CD8-positive, alpha-beta T cell (primary cell): ENCODE measurements at regions of chr17 and their contacts with region 1.

Region 1: GRCh38 chr17:80544655-80545498 is at the start of gene RPTOR:
- DNase-seq: peak; percentile 77 to 92 (median 87)
- ATAC-seq: peak; percentile 99
- H3K4me3 ChIP-seq: peak within 1 kb of the TSS; percentile 95
- H3K4me3 Mint-ChIP-seq: peak within 1 kb of the TSS; percentile 94
- H3K27ac ChIP-seq: peak within 1 kb of the TSS; percentile 61 to 71
- H3K27ac Mint-ChIP-seq: peak within 1 kb of the TSS; percentile 92
- H3K4me1 ChIP-seq: peaks cover 14% of the 10 kb centered on the region
- H3K4me1 Mint-ChIP-seq: peaks cover 32% of the 10 kb centered on the region
- H3K27me3 ChIP-seq: no peaks in the 10 kb centered on the region
- H3K27me3 Mint-ChIP-seq: peaks cover 12% of the 10 kb centered on the region
- CTCF ChIP-seq: no peak
- total RNA-seq, gene RPTOR: 44.5 to 48.3 TPM

Region 2: GRCh38 chr17:80195731-80196529 is 348.9 kb before region 1 on chr17:
- CTCF ChIA-PET with region 1: no interaction called
- POLR2A ChIA-PET with region 1: no interaction called
- intact Hi-C with region 1: no loop called
- DNase-seq: peak; percentile 31 to 81 (median 63)
- ATAC-seq: peak; percentile 52
- H3K4me3 ChIP-seq: no peak overlapping the region
- H3K4me3 Mint-ChIP-seq: no peak overlapping the region
- H3K27ac ChIP-seq: no peak overlapping the region
- H3K27ac Mint-ChIP-seq: no peak overlapping the region
- H3K4me1 ChIP-seq: no peaks in the 10 kb centered on the region
- H3K4me1 Mint-ChIP-seq: no peaks in the 10 kb centered on the region
- H3K27me3 ChIP-seq: no peaks in the 10 kb centered on the region
- H3K27me3 Mint-ChIP-seq: peaks cover 6% of the 10 kb centered on the region
- CTCF ChIP-seq: peak; percentile 97

Region 3: DNA sequence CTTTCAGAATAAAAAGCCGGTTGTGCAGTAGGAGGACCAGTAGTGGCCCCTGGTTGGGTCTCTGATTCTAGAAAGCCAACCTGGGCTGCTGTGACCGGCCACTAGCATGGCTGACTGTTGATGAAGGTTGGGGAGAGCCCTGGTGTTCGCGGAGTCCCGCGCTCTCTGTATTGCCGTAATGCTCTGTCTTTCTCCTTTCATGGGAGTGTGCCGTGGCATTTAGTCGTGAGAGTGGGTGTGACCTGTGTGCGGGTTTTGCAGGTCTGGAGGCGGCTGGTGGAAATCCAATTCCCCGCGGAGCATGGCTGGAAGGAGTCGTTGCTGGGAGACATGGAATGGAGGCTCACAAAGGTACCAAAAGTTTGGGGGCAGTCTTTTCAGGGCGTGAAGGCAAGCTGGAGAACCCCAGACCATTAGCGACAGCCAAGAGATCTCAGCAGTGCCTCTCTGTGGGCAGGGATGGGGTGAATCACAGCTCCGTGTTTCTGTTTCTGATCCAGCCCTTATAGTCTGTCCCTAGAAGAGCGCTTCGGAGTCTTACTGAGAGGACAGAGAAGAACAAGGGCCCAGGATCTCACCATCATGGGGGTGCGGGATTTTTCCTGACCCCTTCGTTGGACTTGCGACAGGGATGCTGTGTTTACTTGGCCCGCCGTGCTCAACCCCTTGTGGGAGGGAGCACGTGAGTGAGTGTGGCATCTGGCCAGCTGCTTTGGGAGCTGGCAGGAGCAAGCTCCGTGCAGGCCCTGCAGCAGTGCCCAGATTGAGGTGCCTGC is 227.8 kb before region 1 on chr17:
- CTCF ChIA-PET with region 1: no interaction called
- POLR2A ChIA-PET with region 1: no interaction called
- intact Hi-C with region 1: no loop called
- DNase-seq: no peak
- ATAC-seq: no peak
- H3K4me3 ChIP-seq: no peak overlapping the region
- H3K4me3 Mint-ChIP-seq: no peak overlapping the region
- H3K27ac ChIP-seq: no peak overlapping the region
- H3K27ac Mint-ChIP-seq: no peak overlapping the region
- H3K4me1 ChIP-seq: no peaks in the 10 kb centered on the region
- H3K4me1 Mint-ChIP-seq: no peaks in the 10 kb centered on the region
- H3K27me3 ChIP-seq: no peaks in the 10 kb centered on the region
- H3K27me3 Mint-ChIP-seq: no peaks in the 10 kb centered on the region
- CTCF ChIP-seq: no peak

Region 4: GRCh38 chr17:80414803-80415625 is 129.9 kb before region 1 on chr17 and contains the start of gene ENDOV:
- CTCF ChIA-PET with region 1: no interaction called
- POLR2A ChIA-PET with region 1: no interaction called
- intact Hi-C with region 1: loop called in 1 of 2 experiments (anchors 10 kb)
- DNase-seq: peak; percentile 87 to 99 (median 95)
- ATAC-seq: peak; percentile 83
- H3K4me3 ChIP-seq: peak within 1 kb of the TSS; percentile 79 to 97
- H3K4me3 Mint-ChIP-seq: peak within 1 kb of the TSS; percentile 85
- H3K27ac ChIP-seq: peak within 1 kb of the TSS; percentile 82 to 87
- H3K27ac Mint-ChIP-seq: peak within 1 kb of the TSS; percentile 87
- H3K4me1 ChIP-seq: peaks cover 18% of the 10 kb centered on the region
- H3K4me1 Mint-ChIP-seq: peaks cover 26% of the 10 kb centered on the region
- H3K27me3 ChIP-seq: peaks cover 0 to 4% of the 10 kb centered on the region in 2 experiments
- H3K27me3 Mint-ChIP-seq: no peaks in the 10 kb centered on the region
- CTCF ChIP-seq: no peak
- total RNA-seq, gene ENDOV: 8.2 to 11.6 TPM

Region 5: GRCh38 chr17:80866147-80866793 is 321.4 kb after region 1 on chr17:
- CTCF ChIA-PET with region 1: no interaction called
- POLR2A ChIA-PET with region 1: no interaction called
- intact Hi-C with region 1: no loop called
- DNase-seq: peak; percentile 34 to 73 (median 63)
- ATAC-seq: peak; percentile 65
- H3K4me3 ChIP-seq: no peak overlapping the region
- H3K4me3 Mint-ChIP-seq: no peak overlapping the region
- H3K27ac ChIP-seq: no peak overlapping the region
- H3K27ac Mint-ChIP-seq: peak overlapping the region; percentile 73
- H3K4me1 ChIP-seq: peaks cover 27% of the 10 kb centered on the region
- H3K4me1 Mint-ChIP-seq: peaks cover 48% of the 10 kb centered on the region
- H3K27me3 ChIP-seq: no peaks in the 10 kb centered on the region
- H3K27me3 Mint-ChIP-seq: no peaks in the 10 kb centered on the region
- CTCF ChIP-seq: peak; percentile 72